Endothelial cell of umbilical vein (primary cell): ENCODE measurements at regions of chr9 and their contacts with region 1.

Region 1: DNA sequence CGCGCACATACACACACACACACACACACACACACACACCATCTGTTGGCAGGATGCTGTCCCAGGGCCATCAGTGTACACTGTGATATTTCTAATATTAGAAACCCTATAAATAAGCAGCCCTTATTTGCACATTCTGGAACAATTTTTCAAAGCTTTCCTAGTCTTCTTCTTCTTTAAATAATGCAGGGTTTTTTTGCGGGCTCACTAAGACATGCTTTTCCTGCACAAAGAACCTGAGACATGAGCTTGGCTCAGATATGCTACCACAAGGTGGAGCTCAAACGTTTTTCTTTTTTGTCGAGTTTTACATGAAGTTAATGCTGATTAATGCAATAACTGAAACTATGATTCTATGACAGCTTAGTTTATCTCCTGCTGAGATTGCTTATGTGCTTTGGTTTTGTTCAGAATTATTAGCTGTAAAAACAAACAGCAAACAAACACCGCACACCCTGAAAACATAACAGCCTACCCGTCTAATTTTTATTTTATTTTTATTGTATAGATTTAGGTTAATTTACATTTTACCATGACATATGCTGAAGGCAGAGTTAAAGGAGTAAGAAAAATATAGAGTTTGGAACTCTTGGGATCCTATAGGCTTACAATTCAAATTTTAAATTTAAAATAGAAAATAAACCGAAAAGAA is 95.8 kb downstream of the ALDH1A1 start:
- DNase-seq: peak; percentile 74
- H3K4me3 ChIP-seq: no peak overlapping the region
- H3K27ac ChIP-seq: peak overlapping the region; percentile 35
- H3K4me1 ChIP-seq: peaks cover 16% of the 10 kb centered on the region
- H3K27me3 ChIP-seq: no peaks in the 10 kb centered on the region
- CTCF ChIP-seq: peak; percentile 60 to 63
- POLR2A ChIP-seq: no peak

Region 2: GRCh38 chr9:72843520-72844439 is 13.3 kb before region 1 on chr9:
- CTCF ChIA-PET with region 1: interaction called, 34 read pairs
- POLR2A ChIA-PET with region 1: no interaction called
- dilution Hi-C with region 1: no loop called
- intact Hi-C with region 1: no loop called
- DNase-seq: no peak
- H3K4me3 ChIP-seq: no peak overlapping the region
- H3K27ac ChIP-seq: no peak overlapping the region
- H3K4me1 ChIP-seq: no peaks in the 10 kb centered on the region
- H3K27me3 ChIP-seq: no peaks in the 10 kb centered on the region
- CTCF ChIP-seq: peak in 1 of 2 donors; percentile 9
- POLR2A ChIP-seq: no peak

Region 3: DNA sequence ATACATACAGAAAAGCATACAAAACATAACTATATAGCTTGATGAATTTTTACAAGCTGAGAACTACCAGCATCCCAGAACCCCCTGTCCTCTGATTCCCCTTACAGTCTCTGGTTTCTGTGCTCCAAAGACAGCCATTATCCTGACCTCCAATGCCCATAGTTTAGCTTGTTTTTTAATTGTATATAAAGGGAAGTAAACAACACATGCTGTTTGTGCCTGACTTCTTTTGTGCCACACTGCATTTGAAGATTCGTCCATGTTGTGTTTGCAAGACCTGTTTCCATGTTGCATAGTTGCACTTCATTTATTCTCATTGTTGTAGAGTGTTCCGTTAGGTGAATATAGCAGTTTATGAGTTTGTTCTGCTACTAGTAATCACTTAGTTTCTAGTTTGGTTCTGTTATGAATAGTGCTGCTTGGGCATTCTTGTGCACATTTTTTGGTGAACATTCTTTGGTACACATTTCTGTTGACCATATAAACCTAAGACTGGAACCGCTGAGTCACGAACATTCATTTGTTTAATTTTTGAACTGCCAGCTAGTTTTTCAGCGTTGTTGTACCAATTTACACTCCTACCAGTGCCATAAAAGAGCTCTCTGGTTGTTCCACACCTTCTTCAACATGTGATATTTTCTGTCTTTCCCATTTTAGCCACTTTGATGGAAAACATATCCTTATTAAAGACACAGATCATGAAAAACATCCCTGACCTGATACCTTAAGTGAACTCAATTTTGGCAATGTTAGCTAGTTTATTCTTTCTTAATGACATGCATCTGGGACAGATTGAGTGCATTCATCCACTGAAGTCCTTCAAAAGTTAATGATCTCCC is 216.5 kb after region 1 on chr9:
- CTCF ChIA-PET with region 1: interaction called, 135 read pairs
- POLR2A ChIA-PET with region 1: no interaction called
- dilution Hi-C with region 1: loop called (anchors 25 kb)
- intact Hi-C with region 1: no loop called
- DNase-seq: no peak
- H3K4me3 ChIP-seq: no peak overlapping the region
- H3K27ac ChIP-seq: peak overlapping the region; percentile 82
- H3K4me1 ChIP-seq: peaks cover 20% of the 10 kb centered on the region
- H3K27me3 ChIP-seq: no peaks in the 10 kb centered on the region
- CTCF ChIP-seq: no peak
- POLR2A ChIP-seq: no peak

Region 4: GRCh38 chr9:73104342-73104741 is 247.2 kb after region 1 on chr9:
- CTCF ChIA-PET with region 1: interaction called, 24 read pairs
- POLR2A ChIA-PET with region 1: no interaction called
- dilution Hi-C with region 1: loop called (anchors 25 kb)
- intact Hi-C with region 1: no loop called
- DNase-seq: no peak
- H3K4me3 ChIP-seq: no peak overlapping the region
- H3K27ac ChIP-seq: no peak overlapping the region
- H3K4me1 ChIP-seq: no peaks in the 10 kb centered on the region
- H3K27me3 ChIP-seq: no peaks in the 10 kb centered on the region
- CTCF ChIP-seq: no peak
- POLR2A ChIP-seq: no peak

Region 5: GRCh38 chr9:73183917-73184861 is 327.1 kb after region 1 on chr9:
- CTCF ChIA-PET with region 1: interaction called, 24 read pairs
- POLR2A ChIA-PET with region 1: no interaction called
- dilution Hi-C with region 1: no loop called
- intact Hi-C with region 1: loop called (anchors 1 kb)
- DNase-seq: peak; percentile 47
- H3K4me3 ChIP-seq: no peak overlapping the region
- H3K27ac ChIP-seq: no peak overlapping the region
- H3K4me1 ChIP-seq: no peaks in the 10 kb centered on the region
- H3K27me3 ChIP-seq: no peaks in the 10 kb centered on the region
- CTCF ChIP-seq: peak; percentile 9 to 10
- POLR2A ChIP-seq: no peak